B cell (primary cell): ENCODE measurements at regions of chr19 and their contacts with region 1.

Region 1: DNA sequence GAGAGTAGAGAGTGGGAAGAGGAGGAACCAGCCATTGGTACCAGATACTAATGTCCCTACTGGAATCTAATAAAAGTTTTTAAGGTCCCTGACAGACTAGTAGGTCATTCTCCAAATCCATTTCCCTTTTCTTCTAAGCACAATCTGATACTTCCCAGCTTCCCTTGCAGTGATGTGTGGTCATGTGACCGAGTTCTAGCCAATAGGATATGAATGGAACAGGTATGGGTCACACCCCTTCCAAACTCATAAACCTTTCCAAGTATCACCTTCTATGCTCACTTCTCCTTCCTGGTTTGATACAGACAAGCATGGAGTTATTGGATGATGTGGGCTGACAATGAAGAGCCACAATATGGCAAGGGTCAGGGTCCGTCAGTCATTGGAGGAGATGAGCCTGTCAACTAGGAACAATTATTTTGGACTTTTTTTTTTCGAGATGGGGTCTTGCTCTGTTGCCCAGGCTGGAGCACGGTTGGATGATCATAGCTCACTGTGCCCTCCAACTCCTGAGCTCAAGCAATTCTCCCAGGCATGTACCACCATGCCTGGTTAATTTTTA is 54.8 kb downstream of the CACNA1A start:
- DNase-seq: no peak
- ATAC-seq: no peak
- H3K4me3 ChIP-seq: no peak overlapping the region
- H3K4me3 Mint-ChIP-seq: no peak overlapping the region
- H3K27ac ChIP-seq: no peak overlapping the region
- H3K27ac Mint-ChIP-seq: no peak overlapping the region
- H3K4me1 ChIP-seq: no peaks in the 10 kb centered on the region
- H3K4me1 Mint-ChIP-seq: no peaks in the 10 kb centered on the region
- H3K27me3 ChIP-seq: no peaks in the 10 kb centered on the region
- H3K27me3 Mint-ChIP-seq: peaks cover 15% of the 10 kb centered on the region
- CTCF ChIP-seq: no peak

Region 2: GRCh38 chr19:13366529-13367143 is 84.9 kb before region 1 on chr19:
- CTCF ChIA-PET with region 1: no interaction called
- POLR2A ChIA-PET with region 1: interaction called, 12 read pairs
- intact Hi-C with region 1: no loop called
- DNase-seq: no peak
- ATAC-seq: no peak
- H3K4me3 ChIP-seq: no peak overlapping the region
- H3K4me3 Mint-ChIP-seq: no peak overlapping the region
- H3K27ac ChIP-seq: no peak overlapping the region
- H3K27ac Mint-ChIP-seq: no peak overlapping the region
- H3K4me1 ChIP-seq: no peaks in the 10 kb centered on the region
- H3K4me1 Mint-ChIP-seq: no peaks in the 10 kb centered on the region
- H3K27me3 ChIP-seq: peaks cover 0 to 5% (median under 1%) of the 10 kb centered on the region in 4 experiments
- H3K27me3 Mint-ChIP-seq: peaks cover 10% of the 10 kb centered on the region
- CTCF ChIP-seq: no peak